ENCODE measurements at regions of chr3 and their contacts with region 1.

Region 1: GRCh38 chr3:113136071-113136470 is 75.3 kb upstream of the BOC start:
- DNase-seq: no peak
- H3K4me3 ChIP-seq: no peak overlapping the region
- CTCF ChIP-seq: peak; percentile 30

Region 2: DNA sequence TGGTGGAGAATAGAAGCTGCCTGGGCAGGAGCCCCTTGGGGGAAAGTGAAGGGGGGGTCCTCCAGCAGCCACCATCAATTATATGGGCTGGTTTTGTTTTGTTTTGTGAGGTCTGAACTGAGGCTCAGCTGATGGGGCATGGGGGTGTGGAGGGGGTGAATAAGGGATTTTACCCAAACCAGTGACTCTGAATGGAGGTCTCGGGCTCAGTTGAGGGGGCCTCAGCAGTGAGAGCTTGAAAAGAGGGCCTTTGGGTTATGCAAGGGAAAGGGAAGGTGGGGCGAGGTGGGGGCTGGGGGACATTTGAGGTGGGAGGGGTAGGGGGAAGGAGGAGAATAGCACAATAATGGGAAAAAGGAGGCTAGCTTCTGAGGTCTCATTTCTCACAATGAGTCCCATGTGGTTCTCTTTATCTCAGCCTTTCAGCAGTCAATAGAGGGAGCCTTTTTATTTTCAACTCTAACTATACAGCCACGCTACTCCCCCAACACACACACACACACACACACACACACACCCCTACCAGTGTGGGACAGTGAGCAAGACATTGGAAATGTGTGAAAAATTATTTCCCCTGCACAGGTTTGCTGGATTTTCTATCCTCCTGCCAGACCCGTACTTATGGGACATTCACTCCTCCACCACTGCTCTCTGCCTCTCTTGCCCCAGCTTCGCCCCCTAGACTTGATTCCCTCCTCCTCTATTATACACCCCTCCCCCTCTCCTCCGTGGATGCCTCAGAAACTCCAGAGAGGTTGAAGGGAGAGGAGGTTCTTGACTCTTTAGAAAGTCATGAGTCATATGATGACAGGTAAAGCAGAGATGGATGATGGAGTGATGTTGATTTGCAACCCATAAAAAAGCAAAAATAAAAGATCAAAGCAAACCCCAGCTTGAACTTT is 49.3 kb before region 1 on chr3:
- CTCF ChIA-PET with region 1: no interaction called
- POLR2A ChIA-PET with region 1: no interaction called
- DNase-seq: no peak
- H3K4me3 ChIP-seq: no peak overlapping the region
- CTCF ChIP-seq: peak; percentile 1

Region 3: DNA sequence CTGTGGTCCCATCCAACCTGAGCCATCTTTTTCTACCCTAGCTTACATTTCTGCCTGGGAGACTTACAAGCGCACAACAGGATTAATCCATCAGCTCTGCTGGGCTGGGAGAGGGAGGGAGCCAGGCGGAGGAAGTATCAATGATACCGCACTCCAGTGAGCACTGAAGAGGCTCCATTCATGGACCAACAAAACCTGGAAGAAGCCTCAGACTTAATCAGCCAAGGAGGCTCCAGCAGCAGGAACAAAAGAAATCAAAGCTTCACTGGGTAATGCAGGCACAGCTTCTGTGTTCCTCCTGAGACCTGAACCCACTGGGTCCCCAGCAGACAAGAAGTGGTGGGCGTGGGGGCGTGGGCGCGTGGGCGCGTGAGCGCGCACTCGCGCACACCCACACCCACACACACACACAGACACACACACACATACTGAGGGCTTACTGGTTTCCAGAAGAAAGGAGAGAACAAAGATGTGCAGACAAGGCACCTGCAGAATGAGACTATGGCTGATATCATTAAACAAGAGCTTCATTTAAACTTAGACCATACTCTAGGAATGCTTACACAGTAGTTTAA is 11.7 kb before region 1 on chr3:
- CTCF ChIA-PET with region 1: interaction called, 22 read pairs
- POLR2A ChIA-PET with region 1: no interaction called
- DNase-seq: no peak
- H3K4me3 ChIP-seq: no peak overlapping the region
- CTCF ChIP-seq: no peak

Region 4: DNA sequence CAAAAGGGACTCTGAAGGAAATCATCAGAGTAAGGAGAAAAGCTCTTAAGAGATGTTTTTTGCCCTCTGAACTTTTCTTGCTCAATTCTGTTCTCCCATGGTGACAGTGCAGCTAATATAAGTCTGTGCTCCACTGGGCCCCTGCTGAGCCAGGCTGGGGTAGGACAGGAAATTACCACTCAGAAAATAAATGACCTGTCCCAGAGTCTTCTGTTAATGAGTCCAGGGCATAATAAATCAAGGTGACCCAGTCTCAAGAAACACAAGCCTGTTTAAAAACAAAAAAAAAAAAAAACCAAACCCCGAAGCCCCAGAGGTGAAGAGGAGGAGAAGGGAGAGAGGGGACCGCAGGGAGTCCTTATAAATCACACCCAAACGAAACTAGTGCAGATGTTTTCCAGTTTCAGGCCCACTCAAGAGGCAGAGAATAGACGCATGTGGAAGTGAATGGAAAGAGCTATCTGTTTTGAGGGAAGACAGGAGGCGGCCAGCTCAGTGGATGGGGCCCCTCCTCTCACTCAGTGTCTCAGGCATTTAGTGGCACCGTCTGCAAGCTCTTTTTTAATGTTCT is 15.5 kb after region 1 on chr3:
- CTCF ChIA-PET with region 1: interaction called, 17 read pairs
- POLR2A ChIA-PET with region 1: no interaction called
- DNase-seq: no peak
- H3K4me3 ChIP-seq: no peak overlapping the region
- CTCF ChIP-seq: no peak

Region 5: DNA sequence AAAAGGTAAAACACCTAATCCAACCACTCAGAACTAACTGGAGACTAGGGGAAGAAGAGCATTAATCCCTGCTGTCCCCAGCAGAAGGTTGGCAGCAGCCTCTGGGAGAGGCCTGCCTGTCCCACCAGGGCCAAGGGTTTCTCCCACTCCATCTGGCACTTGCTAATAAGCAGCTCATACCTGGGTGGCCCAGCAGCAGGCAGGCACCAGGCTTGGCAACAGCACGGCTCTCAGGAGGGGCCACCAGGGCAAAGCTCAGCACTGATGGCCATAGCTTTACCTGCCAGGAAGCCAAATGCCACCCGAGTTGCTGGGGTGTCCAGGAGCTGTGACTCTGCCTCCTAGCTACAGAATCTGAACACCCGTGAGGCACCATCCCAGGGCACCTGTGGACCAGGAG is 133.6 kb after region 1 on chr3:
- CTCF ChIA-PET with region 1: interaction called, 11 read pairs
- POLR2A ChIA-PET with region 1: no interaction called
- DNase-seq: no peak
- H3K4me3 ChIP-seq: no peak overlapping the region
- CTCF ChIP-seq: no peak